ENCODE measurements at regions of chr12 and their contacts with region 1.

Region 1: DNA sequence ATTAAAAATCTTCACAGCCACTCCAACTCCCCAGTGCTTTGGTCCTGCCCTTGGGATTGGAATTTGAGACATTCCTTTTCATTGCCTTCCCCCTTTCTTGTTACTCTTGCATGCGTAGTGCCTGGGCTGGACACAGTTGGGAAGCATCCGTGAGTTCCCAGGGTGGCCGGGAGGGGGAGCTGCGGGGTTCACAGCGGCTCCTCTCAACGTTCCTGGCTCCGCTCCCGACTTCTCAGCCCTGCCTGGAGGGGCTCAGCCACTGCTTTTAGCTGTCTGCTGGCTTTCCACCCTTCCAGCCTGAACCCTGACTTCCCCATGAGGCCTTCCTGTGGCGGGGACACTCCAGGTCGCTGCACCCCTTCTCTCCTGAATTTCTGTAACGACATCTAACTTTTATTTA is 3.2 kb downstream of the TEX52 start:
- DNase-seq: peak; percentile 92
- H3K4me3 ChIP-seq: no peak overlapping the region
- H3K27ac ChIP-seq: no peak overlapping the region
- H3K4me1 ChIP-seq: peaks cover 0 to 5% (median 0%) of the 10 kb centered on the region in 4 donors
- H3K27me3 ChIP-seq: no peaks in the 10 kb centered on the region
- CTCF ChIP-seq: peak; percentile 59 to 88 (median 76)
- EP300 ChIP-seq: no peak
- POLR2A ChIP-seq: no peak

Region 2: DNA sequence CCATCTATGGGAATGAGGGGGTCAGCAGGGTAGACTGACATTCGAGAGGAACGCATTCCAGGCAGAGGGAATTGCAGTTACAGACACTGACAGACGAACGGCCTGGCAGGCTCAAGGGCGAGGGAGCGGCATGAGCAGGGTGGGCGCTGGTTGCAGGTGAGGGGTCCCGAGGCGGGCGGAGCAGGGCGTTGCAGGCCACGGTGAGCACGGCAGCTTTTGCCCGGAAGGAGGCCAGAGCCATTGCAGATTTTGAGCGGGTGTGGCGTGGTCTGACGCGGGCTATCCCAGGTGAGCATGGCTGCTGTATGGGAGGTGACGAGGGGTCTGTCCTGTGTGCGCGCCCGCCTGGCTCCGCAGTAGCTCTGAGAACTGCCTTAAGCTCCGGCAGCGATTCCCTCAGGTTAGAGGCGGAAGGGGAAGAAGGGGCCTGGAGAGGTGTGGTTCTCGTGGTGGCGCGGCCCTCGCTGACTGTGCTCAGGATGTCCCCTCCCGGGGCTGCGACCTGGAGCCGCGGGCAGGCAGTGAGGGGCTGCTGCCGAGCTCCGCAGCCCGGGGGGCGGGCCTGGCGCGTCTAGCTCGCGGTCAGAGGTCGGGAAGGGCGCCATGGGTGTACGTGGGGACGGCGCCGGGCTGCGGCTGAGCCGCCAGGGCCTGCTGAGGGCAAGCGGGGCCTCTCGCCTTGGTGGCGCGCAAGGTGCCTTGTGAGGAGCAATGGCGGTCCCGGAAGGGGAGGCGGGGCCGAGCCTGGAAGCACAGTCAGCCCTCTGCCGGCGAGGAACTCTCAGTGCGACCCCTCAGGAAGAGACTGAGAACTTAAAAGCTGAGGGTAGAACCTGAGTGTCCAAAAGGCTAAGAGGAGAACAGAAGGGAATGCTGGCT is 623.7 kb before region 1 on chr12:
- intact Hi-C with region 1: no loop called
- DNase-seq: peak; percentile 61
- H3K4me3 ChIP-seq: no peak overlapping the region
- H3K27ac ChIP-seq: peak overlapping the region in 3 of 4 donors; percentile 49 to 64 (median 55)
- H3K4me1 ChIP-seq: peaks cover 0 to 64% (median 45%) of the 10 kb centered on the region in 4 donors
- H3K27me3 ChIP-seq: no peaks in the 10 kb centered on the region
- CTCF ChIP-seq: no peak
- EP300 ChIP-seq: no peak
- POLR2A ChIP-seq: no peak

Region 3: GRCh38 chr12:2924019-2924418 is 70.4 kb after region 1 on chr12:
- intact Hi-C with region 1: no loop called
- DNase-seq: peak; percentile 25
- H3K4me3 ChIP-seq: no peak overlapping the region
- H3K27ac ChIP-seq: no peak overlapping the region
- H3K4me1 ChIP-seq: no peaks in the 10 kb centered on the region
- H3K27me3 ChIP-seq: no peaks in the 10 kb centered on the region
- CTCF ChIP-seq: no peak
- EP300 ChIP-seq: no peak
- POLR2A ChIP-seq: no peak

Region 4: GRCh38 chr12:2944401-2945047 is 90.9 kb after region 1 on chr12:
- intact Hi-C with region 1: loop called (anchors 5 kb)
- DNase-seq: peak; percentile 66
- H3K4me3 ChIP-seq: no peak overlapping the region
- H3K27ac ChIP-seq: no peak overlapping the region
- H3K4me1 ChIP-seq: no peaks in the 10 kb centered on the region
- H3K27me3 ChIP-seq: no peaks in the 10 kb centered on the region
- CTCF ChIP-seq: peak in 3 of 4 experiments; percentile 45 to 57 (median 53)
- EP300 ChIP-seq: no peak
- POLR2A ChIP-seq: no peak

Region 5: DNA sequence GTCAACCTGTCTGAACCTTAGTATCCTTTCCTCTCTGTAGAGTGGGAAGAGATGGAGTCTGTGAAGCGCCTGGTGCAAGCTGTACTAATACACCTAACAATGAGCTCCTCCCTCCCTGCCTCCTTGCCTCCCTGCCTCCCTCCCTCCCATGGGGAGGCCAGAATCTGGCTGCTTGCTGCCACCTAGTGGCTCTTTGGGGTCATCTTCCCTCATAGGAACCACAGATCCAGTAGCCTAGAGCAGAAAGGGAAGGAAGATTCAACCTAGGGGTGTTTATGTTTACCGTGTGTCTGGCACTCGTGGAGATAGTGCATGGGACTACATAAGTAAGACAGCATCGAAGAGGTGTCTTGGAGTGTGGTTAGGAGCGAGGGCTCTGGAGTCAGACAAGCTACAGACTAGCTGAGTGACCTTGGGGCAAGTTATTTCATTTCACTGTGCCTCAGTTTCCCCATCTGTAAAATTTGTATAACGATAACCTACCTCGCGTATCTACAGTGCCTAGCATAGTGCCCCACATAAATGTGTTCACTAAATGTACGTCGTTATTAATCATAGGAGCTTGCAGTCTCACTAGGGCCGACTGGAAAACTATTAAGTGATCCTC is 188.0 kb after region 1 on chr12:
- intact Hi-C with region 1: loop called (anchors 2 kb)
- DNase-seq: peak; percentile 79
- H3K4me3 ChIP-seq: no peak overlapping the region
- H3K27ac ChIP-seq: no peak overlapping the region
- H3K4me1 ChIP-seq: no peaks in the 10 kb centered on the region
- H3K27me3 ChIP-seq: no peaks in the 10 kb centered on the region
- CTCF ChIP-seq: peak in 2 of 4 experiments; percentile 33 to 61
- EP300 ChIP-seq: no peak
- POLR2A ChIP-seq: no peak

Region 6: GRCh38 chr12:3073438-3074250 is 220.0 kb after region 1 on chr12:
- intact Hi-C with region 1: no loop called
- DNase-seq: peak; percentile 89
- H3K4me3 ChIP-seq: no peak overlapping the region
- H3K27ac ChIP-seq: peak overlapping the region in 2 of 4 donors; percentile 15 to 41
- H3K4me1 ChIP-seq: peaks cover 0 to 42% (median 35%) of the 10 kb centered on the region in 4 donors
- H3K27me3 ChIP-seq: no peaks in the 10 kb centered on the region
- CTCF ChIP-seq: peak; percentile 78 to 96 (median 92)
- EP300 ChIP-seq: no peak
- POLR2A ChIP-seq: no peak